Activated T-helper 1 cell treated with anti-CD3 and anti-CD28 coated beads, Interleukin-12 subunit alpha, Interleukin-12 subunit beta, Interleukin-2, Interleukin-4 antibody, amounts not matched to agents 30 ng/mL and 10 ng/mL and 1 ng/mL, durations not matched to agents 14 hours and 24 hours and 36 hours (primary cell): ENCODE measurements at regions of chr17 and their contacts with region 1.

Region 1: DNA sequence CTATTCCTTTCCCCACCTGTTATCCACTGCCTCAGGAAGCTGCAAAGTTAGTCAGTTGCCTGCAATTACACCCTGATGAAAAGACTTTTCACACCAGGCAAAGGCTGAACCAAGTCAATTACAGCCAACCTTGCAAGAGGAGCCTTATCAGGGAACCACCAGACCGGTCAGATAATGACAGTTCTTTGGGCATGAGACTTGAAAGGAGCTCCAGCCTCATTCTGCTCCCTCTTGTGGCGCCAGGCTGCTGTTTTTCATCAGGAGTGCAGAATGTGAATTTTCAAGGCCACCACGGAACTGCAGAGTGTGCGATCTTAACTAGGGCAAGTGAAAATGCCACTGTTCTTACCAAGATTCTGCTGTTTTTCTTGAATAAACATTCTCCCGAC is 22.5 kb downstream of the DNAI2 start:
- DNase-seq: peak; percentile 24
- H3K4me3 Mint-ChIP-seq: no peak overlapping the region
- H3K27ac Mint-ChIP-seq: no peak overlapping the region
- H3K4me1 Mint-ChIP-seq: peaks cover 21% of the 10 kb centered on the region
- H3K27me3 Mint-ChIP-seq: peaks cover 11% of the 10 kb centered on the region

Region 2: DNA sequence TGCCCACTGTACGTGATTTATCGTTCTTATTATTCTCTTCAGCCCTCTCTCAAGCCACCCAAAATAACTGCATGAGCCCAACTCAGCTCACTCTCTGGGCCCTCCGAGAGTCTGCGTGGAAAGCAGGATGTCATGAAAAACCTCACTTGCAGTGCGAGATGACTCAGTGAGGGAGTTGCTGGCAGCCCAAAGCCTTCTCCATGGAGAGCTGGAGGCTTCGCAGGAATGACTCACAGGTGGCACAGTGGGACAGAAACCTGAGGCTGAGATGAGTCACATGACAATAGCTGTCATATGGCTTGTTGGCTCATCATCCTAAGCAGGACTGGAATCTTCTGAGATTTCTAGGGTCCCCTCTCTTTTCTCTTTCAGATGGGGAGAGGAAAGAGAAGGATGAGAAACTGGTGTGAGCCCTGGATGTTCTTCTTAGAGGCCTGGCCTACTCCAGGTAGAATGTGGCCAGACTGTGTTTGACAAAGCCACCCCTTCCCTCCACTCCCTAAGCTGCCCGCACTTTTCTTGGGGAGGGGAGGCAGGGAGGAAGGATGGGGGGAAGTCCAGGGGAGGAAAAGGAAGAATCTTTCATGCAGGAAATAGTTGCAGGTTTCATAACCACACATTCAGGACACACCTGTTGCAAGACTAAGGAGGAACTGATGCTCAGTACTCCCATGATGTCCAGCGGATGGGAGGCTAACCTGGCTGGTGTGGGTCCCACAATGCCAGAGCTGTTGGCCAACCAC is 253.6 kb before region 1 on chr17:
- intact Hi-C with region 1: no loop called
- DNase-seq: no peak
- H3K4me3 Mint-ChIP-seq: no peak overlapping the region
- H3K27ac Mint-ChIP-seq: no peak overlapping the region
- H3K4me1 Mint-ChIP-seq: peaks cover 9% of the 10 kb centered on the region
- H3K27me3 Mint-ChIP-seq: peaks cover 4% of the 10 kb centered on the region

Region 3: GRCh38 chr17:74354123-74354522 is 57.6 kb after region 1 on chr17:
- intact Hi-C with region 1: loop called (anchors 1 kb)
- DNase-seq: peak; percentile 39
- H3K4me3 Mint-ChIP-seq: no peak overlapping the region
- H3K27ac Mint-ChIP-seq: no peak overlapping the region
- H3K4me1 Mint-ChIP-seq: peaks cover 4% of the 10 kb centered on the region
- H3K27me3 Mint-ChIP-seq: peaks cover 45% of the 10 kb centered on the region

Region 4: GRCh38 chr17:74514632-74515334 is 218.2 kb after region 1 on chr17:
- intact Hi-C with region 1: no loop called
- DNase-seq: no peak
- H3K4me3 Mint-ChIP-seq: peak overlapping the region; percentile 40
- H3K27ac Mint-ChIP-seq: peak overlapping the region; percentile 99
- H3K4me1 Mint-ChIP-seq: peaks cover 31% of the 10 kb centered on the region
- H3K27me3 Mint-ChIP-seq: peaks cover 15% of the 10 kb centered on the region